Common myeloid progenitor, CD34-positive (primary cell): ENCODE measurements at regions of chr3 and their contacts with region 1.

Region 1: GRCh38 chr3:107574650-107575049 is 51.9 kb downstream of the BBX start:
- DNase-seq: peak; percentile 24 to 41 (median 32)
- H3K4me3 ChIP-seq: no peak overlapping the region
- H3K27ac ChIP-seq: no peak overlapping the region
- H3K4me1 ChIP-seq: no peaks in the 10 kb centered on the region
- H3K27me3 ChIP-seq: no peaks in the 10 kb centered on the region

Region 2: DNA sequence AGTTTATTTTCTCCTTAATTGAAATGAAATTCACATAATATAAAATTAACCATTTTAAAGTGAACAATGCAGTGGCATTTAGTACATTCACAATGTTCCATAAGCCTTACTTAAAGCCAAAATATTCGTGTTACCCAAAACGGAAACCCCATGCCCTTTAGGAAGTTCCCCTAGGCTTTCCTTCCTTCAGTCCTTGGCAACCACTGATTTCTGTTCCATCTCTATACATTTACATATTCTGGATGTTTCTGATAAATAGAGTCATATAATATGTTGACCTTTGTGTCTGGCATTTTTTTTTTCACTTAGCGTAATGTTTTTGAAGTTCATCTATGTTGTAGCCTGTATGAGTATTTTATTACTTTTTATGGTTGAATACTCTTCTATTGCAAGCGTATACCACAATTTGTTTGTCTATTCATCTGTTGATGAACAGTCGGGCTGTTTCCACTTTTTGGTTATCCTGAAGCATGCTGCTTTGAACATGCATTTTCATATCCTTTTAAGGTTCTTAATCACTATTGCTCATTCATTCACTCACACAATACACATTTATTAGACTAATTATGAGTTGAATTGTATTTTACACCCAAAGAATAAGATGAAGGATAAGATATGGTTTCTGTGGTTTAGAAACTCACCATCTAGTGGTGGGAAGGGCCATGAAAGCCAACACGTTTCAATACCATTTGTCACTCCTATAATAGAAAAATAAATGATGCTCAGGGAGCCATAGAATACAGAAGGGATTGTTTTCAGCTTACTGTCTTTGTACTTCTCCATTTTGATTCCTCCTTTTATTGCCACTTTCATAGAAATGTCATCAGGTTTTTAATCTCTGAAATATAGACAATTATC is 1297.7 kb before region 1 on chr3:
- CTCF ChIA-PET with region 1: no interaction called
- POLR2A ChIA-PET with region 1: no interaction called
- DNase-seq: peak in 1 of 3 donors; percentile 3
- H3K4me3 ChIP-seq: no peak overlapping the region
- H3K27ac ChIP-seq: no peak overlapping the region
- H3K4me1 ChIP-seq: no peaks in the 10 kb centered on the region
- H3K27me3 ChIP-seq: no peaks in the 10 kb centered on the region

Region 3: GRCh38 chr3:107560166-107560565 is 14.5 kb before region 1 on chr3:
- CTCF ChIA-PET with region 1: interaction called, 26 read pairs
- POLR2A ChIA-PET with region 1: no interaction called
- DNase-seq: no peak
- H3K4me3 ChIP-seq: no peak overlapping the region
- H3K27ac ChIP-seq: no peak overlapping the region
- H3K4me1 ChIP-seq: no peaks in the 10 kb centered on the region
- H3K27me3 ChIP-seq: no peaks in the 10 kb centered on the region

Region 4: GRCh38 chr3:107590786-107591185 is 16.1 kb after region 1 on chr3:
- CTCF ChIA-PET with region 1: interaction called, 23 read pairs
- POLR2A ChIA-PET with region 1: no interaction called
- DNase-seq: no peak
- H3K4me3 ChIP-seq: no peak overlapping the region
- H3K27ac ChIP-seq: no peak overlapping the region
- H3K4me1 ChIP-seq: no peaks in the 10 kb centered on the region
- H3K27me3 ChIP-seq: no peaks in the 10 kb centered on the region